IMR-90 (cell line): ENCODE measurements at regions of chr11 and their contacts with region 1.

Region 1: GRCh38 chr11:41116970-41117369 is 342.5 kb downstream of the LRRC4C start:
- DNase-seq: no peak
- ATAC-seq: no peak
- H3K4me3 ChIP-seq: no peak overlapping the region
- H3K27ac ChIP-seq: no peak overlapping the region
- H3K4me1 ChIP-seq: no peaks in the 10 kb centered on the region
- H3K27me3 ChIP-seq: no peaks in the 10 kb centered on the region
- CTCF ChIP-seq: no peak
- POLR2A ChIP-seq: no peak
- RAD21 ChIP-seq: no peak

Region 2: GRCh38 chr11:41146326-41146725 is 29.4 kb after region 1 on chr11:
- CTCF ChIA-PET with region 1: no interaction called
- POLR2A ChIA-PET with region 1: no interaction called
- dilution Hi-C with region 1: no loop called
- in situ Hi-C with region 1: no loop called
- intact Hi-C with region 1: no loop called
- DNase-seq: no peak
- ATAC-seq: no peak
- H3K4me3 ChIP-seq: no peak overlapping the region
- H3K27ac ChIP-seq: no peak overlapping the region
- H3K4me1 ChIP-seq: no peaks in the 10 kb centered on the region
- H3K27me3 ChIP-seq: no peaks in the 10 kb centered on the region
- CTCF ChIP-seq: no peak
- POLR2A ChIP-seq: no peak
- RAD21 ChIP-seq: no peak

Region 3: GRCh38 chr11:42762348-42762747 is 1645.4 kb after region 1 on chr11:
- CTCF ChIA-PET with region 1: no interaction called
- POLR2A ChIA-PET with region 1: no interaction called
- dilution Hi-C with region 1: no loop called
- in situ Hi-C with region 1: no loop called
- intact Hi-C with region 1: loop called (anchors 10 kb)
- DNase-seq: no peak
- ATAC-seq: no peak
- H3K4me3 ChIP-seq: no peak overlapping the region
- H3K27ac ChIP-seq: no peak overlapping the region
- H3K4me1 ChIP-seq: no peaks in the 10 kb centered on the region
- H3K27me3 ChIP-seq: no peaks in the 10 kb centered on the region
- CTCF ChIP-seq: no peak
- POLR2A ChIP-seq: no peak
- RAD21 ChIP-seq: no peak